ENCODE measurements at regions of chr10 and their contacts with region 1.

Region 1: GRCh38 chr10:29344073-29344820 is 55.4 kb downstream of the LYZL1 start:
- DNase-seq: no peak
- H3K4me3 ChIP-seq: no peak overlapping the region
- H3K27ac ChIP-seq: no peak overlapping the region
- H3K4me1 ChIP-seq: no peaks in the 10 kb centered on the region
- H3K27me3 ChIP-seq: no peaks in the 10 kb centered on the region
- CTCF ChIP-seq: no peak
- EP300 ChIP-seq: no peak
- POLR2A ChIP-seq: no peak

Region 2: DNA sequence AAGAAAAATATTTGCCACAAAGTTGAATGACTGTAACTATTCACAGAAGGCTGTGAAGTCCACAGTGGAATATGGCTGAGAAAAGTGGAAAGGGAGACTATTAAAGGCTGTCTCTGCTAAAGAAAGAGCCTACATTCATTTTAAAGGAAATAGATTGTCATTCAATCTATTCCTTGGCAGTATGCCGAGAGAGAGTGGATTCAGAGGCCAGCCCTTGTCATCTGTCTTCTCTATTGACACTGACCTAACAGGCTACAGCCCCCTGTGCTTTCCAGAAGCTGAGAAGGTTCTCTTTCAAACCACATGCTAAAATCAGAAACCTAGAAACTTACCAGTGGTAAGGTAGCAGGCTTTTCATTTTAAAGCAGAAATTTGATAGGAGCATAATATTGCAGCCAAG is 1357.4 kb before region 1 on chr10:
- intact Hi-C with region 1: no loop called
- DNase-seq: no peak
- H3K4me3 ChIP-seq: no peak overlapping the region
- H3K27ac ChIP-seq: no peak overlapping the region
- H3K4me1 ChIP-seq: no peaks in the 10 kb centered on the region
- H3K27me3 ChIP-seq: no peaks in the 10 kb centered on the region
- CTCF ChIP-seq: no peak
- EP300 ChIP-seq: no peak
- POLR2A ChIP-seq: no peak

Region 3: GRCh38 chr10:29319205-29319781 is 25.0 kb before region 1 on chr10:
- intact Hi-C with region 1: loop called in 1 of 4 experiments (anchors 1 kb)
- DNase-seq: no peak
- H3K4me3 ChIP-seq: no peak overlapping the region
- H3K27ac ChIP-seq: no peak overlapping the region
- H3K4me1 ChIP-seq: peaks cover 7% of the 10 kb centered on the region
- H3K27me3 ChIP-seq: no peaks in the 10 kb centered on the region
- CTCF ChIP-seq: no peak
- EP300 ChIP-seq: no peak
- POLR2A ChIP-seq: no peak